Gastrocnemius medialis (tissue), 4 donors: ENCODE measurements at regions of chr6 and their contacts with region 1.

Region 1: GRCh38 chr6:133553652-133554051 is 312.5 kb downstream of the EYA4 start:
- DNase-seq: peak; percentile 17 to 31
- ATAC-seq: peak in 1 of 2 donors; percentile 26
- H3K4me3 ChIP-seq: no peak overlapping the region
- H3K27ac ChIP-seq: peak overlapping the region in 1 of 4 donors; percentile 79
- H3K4me1 ChIP-seq: peaks cover 33 to 41% of the 10 kb centered on the region in 2 donors
- H3K27me3 ChIP-seq: no peaks in the 10 kb centered on the region
- CTCF ChIP-seq: peak; percentile 48 to 74 (median 62)
- POLR2A ChIP-seq: no peak

Region 2: DNA sequence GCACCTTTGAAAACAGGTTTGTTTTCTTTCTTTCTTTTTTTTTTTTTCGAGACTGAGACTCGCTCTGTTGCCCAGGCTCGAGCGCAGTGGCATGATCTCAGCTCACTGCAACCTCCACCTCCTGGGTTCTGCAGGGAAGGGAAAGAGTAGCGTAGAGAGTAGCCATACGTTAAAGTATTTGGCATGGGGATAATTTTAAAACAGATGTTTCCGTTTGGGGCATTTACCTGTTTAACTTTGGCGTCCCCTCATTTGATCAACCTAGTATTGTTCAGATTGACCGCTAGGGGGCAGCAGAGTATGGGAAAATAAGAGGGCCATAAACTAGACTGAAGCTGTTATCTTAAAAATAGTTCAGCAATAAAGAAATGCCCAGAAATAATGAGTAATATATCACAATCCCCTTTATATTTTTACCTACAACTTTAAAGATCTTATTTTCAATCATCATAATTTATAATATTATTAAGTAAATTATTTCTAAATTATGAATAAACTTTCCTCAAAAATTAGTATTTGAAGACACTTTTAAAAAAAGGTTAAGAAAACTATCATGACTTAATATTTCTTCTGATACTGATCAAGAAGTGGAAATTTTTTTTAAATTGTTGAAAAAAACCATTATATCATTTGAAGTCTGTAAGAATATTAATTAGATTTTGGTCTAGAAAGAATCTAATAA is 1023.2 kb before region 1 on chr6:
- in situ Hi-C with region 1: loop called in 2 of 4 experiments (anchors 25 kb)
- intact Hi-C with region 1: loop called (anchors 5 kb)
- DNase-seq: peak; percentile 14 to 24
- ATAC-seq: peak; percentile 54 to 82
- H3K4me3 ChIP-seq: no peak overlapping the region
- H3K27ac ChIP-seq: no peak overlapping the region
- H3K4me1 ChIP-seq: no peaks in the 10 kb centered on the region
- H3K27me3 ChIP-seq: no peaks in the 10 kb centered on the region
- CTCF ChIP-seq: peak; percentile 55 to 86 (median 68)
- POLR2A ChIP-seq: no peak

Region 3: DNA sequence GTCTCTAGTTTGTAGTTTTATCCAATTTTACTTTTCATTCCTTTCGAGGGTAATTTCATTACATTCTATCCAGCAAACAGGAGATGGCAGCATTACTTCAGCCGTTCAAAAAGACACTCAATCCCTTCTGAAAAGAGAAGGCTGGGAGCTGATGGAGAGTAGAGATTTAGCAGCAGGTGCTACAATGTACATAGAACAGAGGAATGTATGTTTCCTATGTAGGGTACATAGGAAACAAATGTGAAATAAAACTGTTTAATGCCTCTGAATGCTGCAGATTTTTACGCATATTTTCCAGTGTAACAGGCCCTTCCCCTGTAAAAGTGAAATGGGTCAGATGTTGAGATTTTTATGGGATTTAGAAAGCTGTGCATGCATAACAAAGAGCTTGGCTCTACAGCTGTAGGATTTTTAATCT is 723.3 kb before region 1 on chr6:
- in situ Hi-C with region 1: loop called in 3 of 4 experiments (anchors 10 to 25 kb)
- intact Hi-C with region 1: loop called (anchors 2 kb)
- DNase-seq: no peak
- ATAC-seq: peak in 1 of 2 donors; percentile 80
- H3K4me3 ChIP-seq: no peak overlapping the region
- H3K27ac ChIP-seq: no peak overlapping the region
- H3K4me1 ChIP-seq: no peaks in the 10 kb centered on the region
- H3K27me3 ChIP-seq: no peaks in the 10 kb centered on the region
- CTCF ChIP-seq: peak in 1 of 5 experiments; percentile 34
- POLR2A ChIP-seq: no peak

Region 4: DNA sequence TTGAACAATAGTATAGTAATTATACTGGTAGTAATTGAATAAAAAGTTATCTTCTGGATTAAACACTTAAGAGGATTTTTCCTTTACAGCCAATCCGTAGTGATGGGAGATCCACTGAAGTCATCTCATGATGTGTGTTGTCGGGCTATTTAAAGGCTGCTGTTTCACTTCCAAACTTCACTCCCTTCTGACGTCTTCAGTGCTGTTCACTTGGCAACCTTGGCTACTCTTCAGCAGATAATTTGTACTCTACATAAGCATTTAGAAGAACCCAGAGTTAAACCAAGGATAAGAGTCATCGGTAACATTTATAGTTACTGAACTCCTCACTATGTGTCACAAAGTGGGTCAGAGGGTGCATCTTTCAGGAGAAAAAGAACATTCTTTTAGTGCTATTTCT is 491.6 kb before region 1 on chr6:
- in situ Hi-C with region 1: no loop called
- intact Hi-C with region 1: loop called (anchors 5 kb)
- DNase-seq: peak; percentile 46 to 51
- ATAC-seq: peak; percentile 97 to 99
- H3K4me3 ChIP-seq: peak overlapping the region in 2 of 4 donors; percentile 21 to 30
- H3K27ac ChIP-seq: peak overlapping the region; percentile 59 to 79 (median 74)
- H3K4me1 ChIP-seq: peaks cover 14 to 17% of the 10 kb centered on the region in 2 donors
- H3K27me3 ChIP-seq: no peaks in the 10 kb centered on the region
- CTCF ChIP-seq: no peak
- POLR2A ChIP-seq: peak in 1 of 2 donors; percentile 33

Region 5: DNA sequence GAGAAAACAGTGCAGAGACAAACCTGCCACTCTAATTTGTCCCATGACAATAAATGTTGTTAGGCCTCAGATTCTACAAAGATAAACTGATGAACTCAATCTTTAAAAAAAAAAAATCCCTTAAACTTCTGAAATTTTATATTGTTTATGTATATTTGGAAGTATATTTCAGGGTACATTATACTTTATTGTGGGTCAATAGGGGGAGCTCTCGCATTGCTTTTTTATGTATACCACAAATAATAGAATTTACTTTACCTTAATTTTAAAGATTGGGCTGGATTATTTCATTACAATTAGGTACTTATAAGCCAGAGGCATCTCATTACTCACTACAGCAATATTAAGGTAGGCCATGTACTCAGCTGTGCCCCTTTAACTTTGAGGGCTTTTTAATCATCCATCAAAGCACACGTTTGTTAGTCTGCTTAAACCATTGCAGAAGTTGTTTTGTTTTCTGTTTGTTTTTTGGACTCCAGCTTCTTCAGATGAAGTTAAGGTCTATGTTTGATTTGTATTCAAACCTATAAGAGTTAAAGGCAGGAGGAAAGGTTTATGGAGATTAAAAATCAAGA is 368.8 kb before region 1 on chr6:
- in situ Hi-C with region 1: loop called in 3 of 4 experiments (anchors 10 kb)
- intact Hi-C with region 1: loop called (anchors 2 kb)
- DNase-seq: no peak
- ATAC-seq: no peak
- H3K4me3 ChIP-seq: no peak overlapping the region
- H3K27ac ChIP-seq: peak overlapping the region in 1 of 4 donors; percentile 42
- H3K4me1 ChIP-seq: no peaks in the 10 kb centered on the region
- H3K27me3 ChIP-seq: no peaks in the 10 kb centered on the region
- CTCF ChIP-seq: peak; percentile 42 to 69 (median 59)
- POLR2A ChIP-seq: no peak